Dendritic cell treated with granulocyte-macrophage colony-stimulating factor and Interleukin-4, amounts not matched to agents 40 ng/mL and 50 ng/mL, for 4 days (primary cell): ENCODE measurements at regions of chr1 and their contacts with region 1.

Region 1: GRCh38 chr1:178282949-178283367 is 189.1 kb downstream of the RASAL2 start:
- H3K4me3 Mint-ChIP-seq: no peak overlapping the region
- H3K27ac Mint-ChIP-seq: no peak overlapping the region
- H3K4me1 Mint-ChIP-seq: peaks cover 46% of the 10 kb centered on the region
- H3K27me3 Mint-ChIP-seq: no peaks in the 10 kb centered on the region

Region 2: DNA sequence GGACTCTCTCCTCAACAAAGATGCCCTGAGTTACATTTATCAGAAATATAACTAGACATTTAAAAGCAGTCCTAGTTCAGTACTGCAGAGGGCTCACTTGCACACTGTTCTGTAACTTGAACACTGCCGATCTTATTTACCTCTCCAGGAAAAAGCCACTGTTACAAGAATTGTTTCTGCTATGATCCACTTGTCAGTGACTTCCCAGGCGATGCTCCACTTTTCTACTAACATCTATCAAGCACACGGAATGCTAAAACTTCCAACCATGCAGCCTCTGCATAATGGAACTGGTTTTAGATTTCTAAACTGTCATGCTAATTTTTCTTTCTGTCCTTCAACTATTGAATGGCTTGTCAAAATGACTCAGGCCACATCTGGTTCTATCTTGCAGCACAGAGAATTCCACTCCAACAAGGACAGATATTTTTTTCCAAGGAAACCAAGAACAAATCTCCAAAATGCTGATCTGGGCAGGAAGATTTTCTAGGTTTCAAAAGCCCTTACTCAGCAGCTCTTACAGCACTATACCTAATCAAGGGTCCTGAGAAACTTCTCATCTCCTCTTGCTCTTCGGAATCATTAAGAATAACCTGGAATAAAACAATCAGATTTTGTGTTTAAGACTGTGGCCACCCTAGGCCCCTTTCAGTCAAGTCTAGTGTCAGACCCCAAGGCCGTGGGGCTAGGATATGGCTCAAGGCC is 323.0 kb before region 1 on chr1:
- intact Hi-C with region 1: loop called (anchors 10 kb)
- H3K4me3 Mint-ChIP-seq: no peak overlapping the region
- H3K27ac Mint-ChIP-seq: no peak overlapping the region
- H3K4me1 Mint-ChIP-seq: no peaks in the 10 kb centered on the region
- H3K27me3 Mint-ChIP-seq: no peaks in the 10 kb centered on the region

Region 3: DNA sequence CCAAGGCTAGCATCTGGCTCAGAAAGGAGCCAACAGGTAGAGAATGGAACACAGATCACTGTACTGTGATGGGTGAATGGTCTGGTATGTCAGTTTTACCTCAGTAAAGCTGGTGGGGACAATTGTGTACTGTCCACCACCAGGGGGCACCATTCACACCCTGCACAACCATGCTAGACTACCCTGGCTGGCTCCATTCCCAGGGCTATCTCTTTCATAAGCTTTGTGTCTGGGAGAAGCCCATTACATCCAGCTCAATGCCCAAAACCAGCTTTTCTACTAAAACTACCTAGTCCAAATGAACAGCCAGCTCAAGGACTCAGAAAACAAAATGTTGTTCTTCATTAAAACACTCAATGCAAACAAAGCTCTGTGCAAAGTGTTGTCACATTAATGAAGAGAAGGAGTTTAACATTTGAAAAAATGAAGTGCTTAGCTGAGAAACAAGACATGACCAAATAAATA is 251.1 kb before region 1 on chr1:
- intact Hi-C with region 1: loop called (anchors 5 kb)
- H3K4me3 Mint-ChIP-seq: no peak overlapping the region
- H3K27ac Mint-ChIP-seq: no peak overlapping the region
- H3K4me1 Mint-ChIP-seq: peaks cover 7% of the 10 kb centered on the region
- H3K27me3 Mint-ChIP-seq: no peaks in the 10 kb centered on the region